Dendritic cell treated with granulocyte-macrophage colony-stimulating factor and Interleukin-4, amounts not matched to agents 40 ng/mL and 50 ng/mL, for 4 days (primary cell): ENCODE measurements at regions of chr10 and their contacts with region 1.

Region 1: GRCh38 chr10:90751107-90751997 is 106.5 kb downstream of the HTR7 start:
- H3K4me3 Mint-ChIP-seq: no peak overlapping the region
- H3K27ac Mint-ChIP-seq: no peak overlapping the region
- H3K4me1 Mint-ChIP-seq: peaks cover 5% of the 10 kb centered on the region
- H3K27me3 Mint-ChIP-seq: peaks cover 17% of the 10 kb centered on the region

Region 2: GRCh38 chr10:90787393-90788198 is 36.2 kb after region 1 on chr10:
- intact Hi-C with region 1: loop called (anchors 1 kb)
- H3K4me3 Mint-ChIP-seq: no peak overlapping the region
- H3K27ac Mint-ChIP-seq: no peak overlapping the region
- H3K4me1 Mint-ChIP-seq: peaks cover 17% of the 10 kb centered on the region
- H3K27me3 Mint-ChIP-seq: peaks cover 2% of the 10 kb centered on the region

Region 3: GRCh38 chr10:90847417-90847816 is 96.1 kb after region 1 on chr10:
- intact Hi-C with region 1: no loop called
- H3K4me3 Mint-ChIP-seq: no peak overlapping the region
- H3K27ac Mint-ChIP-seq: no peak overlapping the region
- H3K4me1 Mint-ChIP-seq: peaks cover 11% of the 10 kb centered on the region
- H3K27me3 Mint-ChIP-seq: peaks cover 6% of the 10 kb centered on the region

Region 4: GRCh38 chr10:90862908-90863514 is 111.7 kb after region 1 on chr10:
- intact Hi-C with region 1: loop called (anchors 1 kb)
- H3K4me3 Mint-ChIP-seq: no peak overlapping the region
- H3K27ac Mint-ChIP-seq: no peak overlapping the region
- H3K4me1 Mint-ChIP-seq: peaks cover 6% of the 10 kb centered on the region
- H3K27me3 Mint-ChIP-seq: peaks cover 21% of the 10 kb centered on the region